ENCODE measurements at regions of chr1 and their contacts with region 1.

Region 1: GRCh38 chr1:196344453-196344852 is 263.8 kb downstream of the KCNT2 start:
- DNase-seq: no peak
- H3K4me3 ChIP-seq: no peak overlapping the region
- H3K27ac ChIP-seq: no peak overlapping the region
- H3K27me3 ChIP-seq: no peaks in the 10 kb centered on the region
- CTCF ChIP-seq: no peak

Region 2: DNA sequence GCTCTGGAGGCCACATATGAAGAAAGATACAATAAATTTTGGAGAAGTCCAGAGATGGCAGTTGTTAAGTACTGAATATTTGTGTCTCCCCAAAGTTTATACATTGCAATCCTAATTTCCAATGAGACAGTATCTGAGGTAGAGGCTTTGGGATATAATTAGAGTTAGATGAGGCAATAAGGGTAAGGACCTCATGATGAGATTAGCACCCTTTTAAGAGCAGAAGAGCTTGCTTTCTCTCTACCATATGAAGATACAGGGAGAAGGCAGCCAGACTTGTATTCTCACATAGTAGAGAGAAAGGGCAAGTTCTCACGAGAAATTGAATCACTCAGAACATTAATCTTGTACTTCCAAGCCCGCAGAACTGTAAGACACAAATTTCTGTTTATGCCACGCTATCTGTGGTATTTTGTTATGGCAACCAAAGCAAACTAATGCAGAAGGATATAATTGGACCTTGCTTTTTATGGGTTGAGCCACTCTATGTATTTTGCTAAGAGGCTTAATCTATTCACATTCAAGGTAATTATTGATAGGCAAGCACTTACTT is 166.3 kb before region 1 on chr1:
- CTCF ChIA-PET with region 1: no interaction called
- POLR2A ChIA-PET with region 1: no interaction called
- DNase-seq: peak; percentile 7
- H3K4me3 ChIP-seq: no peak overlapping the region
- H3K27ac ChIP-seq: no peak overlapping the region
- H3K27me3 ChIP-seq: no peaks in the 10 kb centered on the region
- CTCF ChIP-seq: no peak

Region 3: GRCh38 chr1:196259316-196259715 is 85.1 kb before region 1 on chr1:
- CTCF ChIA-PET with region 1: no interaction called
- POLR2A ChIA-PET with region 1: no interaction called
- DNase-seq: no peak
- H3K4me3 ChIP-seq: no peak overlapping the region
- H3K27ac ChIP-seq: no peak overlapping the region
- H3K27me3 ChIP-seq: no peaks in the 10 kb centered on the region
- CTCF ChIP-seq: no peak

Region 4: DNA sequence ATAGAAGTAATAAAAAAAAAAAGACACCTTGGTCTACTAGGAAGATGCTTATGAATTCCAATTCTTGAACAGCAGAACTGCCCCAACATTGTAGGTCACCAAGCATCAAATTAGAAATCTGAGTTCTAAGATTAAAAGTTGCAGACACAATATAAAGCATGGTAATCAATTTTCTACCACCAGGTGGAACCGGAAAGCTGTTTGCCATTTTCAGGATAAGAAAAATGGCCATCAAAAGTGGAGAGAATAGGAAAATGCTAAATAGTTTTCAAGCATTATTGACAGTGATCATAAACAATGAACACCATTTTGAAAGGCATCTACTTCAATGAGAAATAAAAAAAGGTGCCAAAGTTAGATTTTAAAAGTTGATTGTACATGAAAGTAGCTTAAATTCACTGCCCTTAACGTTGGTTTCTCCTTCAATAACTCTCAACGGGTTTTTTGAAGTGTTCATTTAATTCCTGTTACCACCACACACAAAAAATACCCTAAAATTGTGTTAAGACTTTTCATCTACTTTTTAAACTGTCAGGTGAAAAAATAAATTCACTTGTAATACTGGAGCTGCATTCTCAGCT is 10.8 kb after region 1 on chr1:
- CTCF ChIA-PET with region 1: interaction called, 10 read pairs
- POLR2A ChIA-PET with region 1: no interaction called
- DNase-seq: no peak
- H3K4me3 ChIP-seq: no peak overlapping the region
- H3K27ac ChIP-seq: no peak overlapping the region
- H3K27me3 ChIP-seq: no peaks in the 10 kb centered on the region
- CTCF ChIP-seq: peak; percentile 67

Measured in AG04450 (cell line).